ENCODE measurements at regions of chr3 and their contacts with region 1.

Region 1: DNA sequence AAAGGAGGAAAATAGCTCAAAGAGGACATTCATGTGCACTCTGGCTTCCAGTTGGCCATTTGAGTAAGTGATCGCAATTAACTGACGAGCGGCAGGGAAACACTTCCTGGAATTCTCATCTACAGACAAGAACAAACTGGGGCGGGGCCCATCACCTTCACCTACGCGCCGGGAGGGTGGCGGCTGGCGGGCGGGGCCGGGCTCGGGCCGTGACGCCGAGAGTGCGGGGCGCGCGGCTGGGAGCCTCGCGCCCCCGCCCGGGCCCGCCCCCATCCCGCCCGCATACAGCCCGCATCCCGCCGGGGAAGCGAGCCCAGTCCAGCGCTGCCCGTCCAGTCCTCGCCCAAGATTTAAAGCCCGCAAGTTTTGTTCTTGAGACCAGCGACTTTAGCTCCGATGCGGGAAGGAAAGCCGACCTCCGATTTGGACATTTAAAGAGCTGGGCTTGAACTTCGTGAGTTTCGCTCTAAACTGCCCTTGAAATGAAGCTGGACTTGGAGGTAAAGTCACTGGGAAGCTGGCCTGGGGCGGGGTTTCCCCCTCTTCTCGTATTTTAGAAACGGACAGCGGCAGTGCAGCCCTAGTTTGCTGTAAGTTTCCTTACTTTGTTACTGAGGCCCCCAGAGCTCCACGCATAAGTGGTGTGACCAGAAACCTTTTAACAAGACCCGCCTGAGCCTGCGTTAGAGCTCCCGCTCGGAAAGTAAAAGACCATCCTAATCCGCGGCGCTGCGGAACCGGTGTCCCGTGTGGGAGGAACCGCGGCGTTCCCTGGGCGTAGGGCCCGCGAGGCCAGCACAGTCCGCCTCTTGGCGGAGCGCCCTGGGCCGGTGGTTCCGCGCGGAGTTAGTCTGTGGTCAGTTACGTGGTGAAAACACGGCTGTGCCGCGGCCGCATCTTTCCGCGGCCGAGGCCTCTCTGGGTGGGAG is at the start of gene B3GNT5:
- DNase-seq: peak; percentile 91
- H3K4me3 ChIP-seq: peak within 1 kb of the TSS; percentile 75 to 87
- H3K27ac ChIP-seq: peak within 1 kb of the TSS; percentile 94 to 96
- H3K4me1 ChIP-seq: no peaks in the 10 kb centered on the region
- H3K27me3 ChIP-seq: no peaks in the 10 kb centered on the region
- CTCF ChIP-seq: no peak
- POLR2A ChIP-seq: peak; percentile 35
- total RNA-seq, gene B3GNT5: 5.9 to 7.2 TPM

Region 2: GRCh38 chr3:183116025-183116614 is 137.1 kb before region 1 on chr3:
- intact Hi-C with region 1: no loop called
- DNase-seq: peak; percentile 39
- H3K4me3 ChIP-seq: peak overlapping the region in 1 of 2 donors; percentile 10
- H3K27ac ChIP-seq: no peak overlapping the region
- H3K4me1 ChIP-seq: no peaks in the 10 kb centered on the region
- H3K27me3 ChIP-seq: no peaks in the 10 kb centered on the region
- CTCF ChIP-seq: no peak
- POLR2A ChIP-seq: no peak

Region 3: DNA sequence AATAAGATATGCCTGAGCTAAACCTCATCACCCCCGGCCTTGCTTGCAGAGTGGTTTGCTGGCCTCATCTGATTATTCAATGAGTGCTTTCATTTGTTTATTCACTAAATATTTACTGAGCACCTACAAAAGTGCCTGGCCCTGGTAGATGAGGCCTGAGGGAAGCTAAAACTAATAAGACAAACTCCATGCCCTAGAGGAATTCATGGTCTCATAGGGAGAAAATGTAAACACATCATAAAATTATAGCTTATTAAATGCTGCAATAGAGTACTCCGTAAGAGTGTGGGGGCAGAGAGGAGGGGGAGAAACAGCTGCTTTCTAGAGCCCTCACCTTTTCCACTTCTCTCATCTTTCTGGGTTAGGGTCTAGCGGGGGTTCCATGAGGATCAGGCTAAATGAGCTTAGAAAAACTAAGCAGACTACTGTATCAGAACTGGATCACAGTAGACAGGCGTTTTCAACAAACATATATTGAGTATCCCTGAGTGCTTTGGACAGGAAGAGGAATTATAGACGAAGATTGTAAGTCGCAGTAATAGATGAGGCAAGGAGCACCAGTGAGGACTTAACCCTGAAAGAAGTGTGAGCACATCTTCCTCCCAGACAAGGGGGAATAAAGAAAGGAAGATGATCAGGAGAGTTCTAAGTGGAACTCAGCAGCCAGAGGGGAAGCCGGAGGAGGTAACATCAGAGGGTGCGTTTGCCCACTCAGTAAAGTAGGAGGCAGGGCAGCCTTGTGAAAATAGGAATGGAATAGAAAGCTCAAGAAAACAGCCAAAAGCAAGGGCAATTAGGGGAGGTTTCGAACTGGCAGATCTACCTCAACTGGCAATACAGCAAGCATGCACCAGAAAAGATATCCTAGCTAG is 59.2 kb before region 1 on chr3:
- intact Hi-C with region 1: loop called (anchors 5 kb)
- DNase-seq: no peak
- H3K4me3 ChIP-seq: no peak overlapping the region
- H3K27ac ChIP-seq: no peak overlapping the region
- H3K4me1 ChIP-seq: no peaks in the 10 kb centered on the region
- H3K27me3 ChIP-seq: no peaks in the 10 kb centered on the region
- CTCF ChIP-seq: no peak
- POLR2A ChIP-seq: no peak

Measured in prostate gland (tissue), 2 donors.